WTC11 (cell line): ENCODE measurements at regions of chr21 and their contacts with region 1.

Region 1: GRCh38 chr21:29217818-29218291 is 80.9 kb upstream of the BACH1 start:
- DNase-seq: no peak
- ATAC-seq: no peak
- H3K4me3 Mint-ChIP-seq: no peak overlapping the region
- H3K27ac Mint-ChIP-seq: no peak overlapping the region; the same call in 1 of the 2 replicates
- H3K4me1 Mint-ChIP-seq: peaks cover 15% of the 10 kb centered on the region
- H3K27me3 Mint-ChIP-seq: no peaks in the 10 kb centered on the region
- CTCF ChIP-seq: no peak

Region 2: GRCh38 chr21:29196670-29197191 is 21.1 kb before region 1 on chr21:
- CTCF ChIA-PET with region 1: no interaction called
- POLR2A ChIA-PET with region 1: interaction called, 13 read pairs
- DNase-seq: no peak
- ATAC-seq: no peak
- H3K4me3 Mint-ChIP-seq: no peak overlapping the region
- H3K27ac Mint-ChIP-seq: no peak overlapping the region
- H3K4me1 Mint-ChIP-seq: peaks cover 37% of the 10 kb centered on the region
- H3K27me3 Mint-ChIP-seq: no peaks in the 10 kb centered on the region
- CTCF ChIP-seq: no peak